Heart left ventricle (tissue), 16 donors: ENCODE measurements at regions of chr5 and their contacts with region 1.

Region 1: GRCh38 chr5:94524841-94525697 is 93.3 kb downstream of the KIAA0825 start:
- DNase-seq: no peak
- ATAC-seq: peak in 1 of 4 donors; percentile 56
- H3K4me3 ChIP-seq: no peak overlapping the region
- H3K27ac ChIP-seq: no peak overlapping the region
- H3K4me1 ChIP-seq: peaks cover 0 to 5% (median 0%) of the 10 kb centered on the region in 12 donors
- H3K27me3 ChIP-seq: no peaks in the 10 kb centered on the region
- CTCF ChIP-seq: peak; percentile 26 to 65 (median 52)
- POLR2A ChIP-seq: no peak

Region 2: GRCh38 chr5:94618493-94619328 is 93.6 kb after region 1 on chr5 and contains the starts of genes KIAA0825 and SLF1:
- intact Hi-C with region 1: loop called in 1 of 10 experiments (anchors 5 kb)
- DNase-seq: peak; percentile 85 to 92 (median 90)
- ATAC-seq: peak; percentile 97 to 99 (median 99)
- H3K4me3 ChIP-seq: peak within 1 kb of the TSS; percentile 61 to 91 (median 72)
- H3K27ac ChIP-seq: peak within 1 kb of the TSS; percentile 5 to 86 (median 71)
- H3K4me1 ChIP-seq: peaks cover 0 to 28% (median 16%) of the 10 kb centered on the region in 12 donors
- H3K27me3 ChIP-seq: no peaks in the 10 kb centered on the region
- CTCF ChIP-seq: no peak
- POLR2A ChIP-seq: peak in 1 of 2 donors; percentile 23
- total RNA-seq, gene KIAA0825: 1.6 to 4.1 (median 2.4) TPM
- total RNA-seq, gene SLF1: 4.0 to 8.1 (median 5.8) TPM

Region 3: GRCh38 chr5:94693043-94693822 is 168.2 kb after region 1 on chr5:
- intact Hi-C with region 1: loop called in 5 of 10 experiments (anchors 5 to 10 kb)
- DNase-seq: no peak
- ATAC-seq: peak in 3 of 4 donors; percentile 53 to 76 (median 55)
- H3K4me3 ChIP-seq: no peak overlapping the region
- H3K27ac ChIP-seq: no peak overlapping the region
- H3K4me1 ChIP-seq: peaks cover 0 to 16% (median 3%) of the 10 kb centered on the region in 12 donors
- H3K27me3 ChIP-seq: no peaks in the 10 kb centered on the region
- CTCF ChIP-seq: peak; percentile 6 to 53 (median 36)
- POLR2A ChIP-seq: no peak

Region 4: GRCh38 chr5:94731471-94731870 is 206.4 kb after region 1 on chr5:
- intact Hi-C with region 1: loop called in 8 of 10 experiments (anchors 5 to 10 kb)
- DNase-seq: no peak
- ATAC-seq: no peak
- H3K4me3 ChIP-seq: no peak overlapping the region
- H3K27ac ChIP-seq: no peak overlapping the region
- H3K4me1 ChIP-seq: no peaks in the 10 kb centered on the region
- H3K27me3 ChIP-seq: no peaks in the 10 kb centered on the region
- CTCF ChIP-seq: no peak
- POLR2A ChIP-seq: no peak

Region 5: GRCh38 chr5:94740286-94740685 is 215.2 kb after region 1 on chr5:
- intact Hi-C with region 1: loop called in 9 of 10 experiments (anchors 2 to 10 kb)
- DNase-seq: no peak
- ATAC-seq: no peak
- H3K4me3 ChIP-seq: no peak overlapping the region
- H3K27ac ChIP-seq: no peak overlapping the region
- H3K4me1 ChIP-seq: no peaks in the 10 kb centered on the region
- H3K27me3 ChIP-seq: no peaks in the 10 kb centered on the region
- CTCF ChIP-seq: no peak
- POLR2A ChIP-seq: no peak